B cell (primary cell): ENCODE measurements at regions of chr11 and their contacts with region 1.

Region 1: GRCh38 chr11:112033156-112033555 is 7.9 kb downstream of the DLAT start:
- DNase-seq: no peak
- ATAC-seq: no peak
- H3K4me3 ChIP-seq: no peak overlapping the region
- H3K4me3 Mint-ChIP-seq: no peak overlapping the region
- H3K27ac ChIP-seq: no peak overlapping the region
- H3K27ac Mint-ChIP-seq: no peak overlapping the region
- H3K4me1 ChIP-seq: no peaks in the 10 kb centered on the region
- H3K4me1 Mint-ChIP-seq: peaks cover 5% of the 10 kb centered on the region
- H3K27me3 ChIP-seq: no peaks in the 10 kb centered on the region
- H3K27me3 Mint-ChIP-seq: no peaks in the 10 kb centered on the region
- CTCF ChIP-seq: no peak

Region 2: GRCh38 chr11:112016765-112017356 is 16.3 kb before region 1 on chr11:
- CTCF ChIA-PET with region 1: no interaction called
- POLR2A ChIA-PET with region 1: no interaction called
- intact Hi-C with region 1: no loop called
- DNase-seq: no peak
- ATAC-seq: no peak
- H3K4me3 ChIP-seq: no peak overlapping the region
- H3K4me3 Mint-ChIP-seq: peak overlapping the region; percentile 79
- H3K27ac ChIP-seq: no peak overlapping the region
- H3K27ac Mint-ChIP-seq: no peak overlapping the region
- H3K4me1 ChIP-seq: peaks cover 0 to 9% of the 10 kb centered on the region in 2 donors
- H3K4me1 Mint-ChIP-seq: peaks cover 7% of the 10 kb centered on the region
- H3K27me3 ChIP-seq: no peaks in the 10 kb centered on the region
- H3K27me3 Mint-ChIP-seq: peaks cover 2% of the 10 kb centered on the region
- CTCF ChIP-seq: no peak

Region 3: DNA sequence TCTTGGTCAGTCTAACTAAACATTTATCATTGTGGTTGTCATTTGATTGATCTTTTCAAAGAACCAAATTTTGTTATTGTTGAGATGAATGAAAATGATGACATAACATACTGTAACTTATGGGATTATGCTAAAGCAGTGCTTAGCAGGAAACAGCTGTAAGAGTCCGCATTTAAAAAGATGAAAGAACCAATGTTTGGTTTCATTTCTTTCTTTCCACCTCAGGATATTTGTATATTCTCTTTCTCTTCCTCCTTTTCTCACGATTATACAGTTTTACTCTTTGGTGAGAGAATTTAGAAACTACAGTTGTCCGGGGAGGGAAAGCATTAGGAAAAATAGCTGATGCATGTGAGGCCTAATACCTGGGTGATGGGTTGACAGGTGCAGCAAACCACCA is 17.6 kb after region 1 on chr11:
- CTCF ChIA-PET with region 1: interaction called, 3 read pairs
- POLR2A ChIA-PET with region 1: interaction called, 16 read pairs
- intact Hi-C with region 1: no loop called
- DNase-seq: peak; percentile 49
- ATAC-seq: peak; percentile 51
- H3K4me3 ChIP-seq: peak overlapping the region in 1 of 5 experiments; percentile 16
- H3K4me3 Mint-ChIP-seq: peak overlapping the region; percentile 42
- H3K27ac ChIP-seq: peak overlapping the region; percentile 0 to 75
- H3K27ac Mint-ChIP-seq: peak overlapping the region; percentile 75
- H3K4me1 ChIP-seq: peaks cover 39 to 40% of the 10 kb centered on the region in 2 donors
- H3K4me1 Mint-ChIP-seq: peaks cover 48% of the 10 kb centered on the region
- H3K27me3 ChIP-seq: no peaks in the 10 kb centered on the region
- H3K27me3 Mint-ChIP-seq: no peaks in the 10 kb centered on the region
- CTCF ChIP-seq: no peak